CD14-positive monocyte (primary cell): ENCODE measurements at regions of chr3 and their contacts with region 1.

Region 1: GRCh38 chr3:72270072-72270681 is 485.2 kb upstream of the PROK2 start:
- DNase-seq: peak; percentile 96 to 99 (median 97)
- H3K4me3 ChIP-seq: peak overlapping the region in 1 of 3 experiments; percentile 25
- H3K4me3 Mint-ChIP-seq: peak overlapping the region in 1 of 2 donors; percentile 69
- H3K27ac ChIP-seq: peak overlapping the region; percentile 75 to 92
- H3K27ac Mint-ChIP-seq: peak overlapping the region; percentile 96 to 98 (median 97)
- H3K4me1 ChIP-seq: peaks cover 64 to 74% of the 10 kb centered on the region in 2 donors
- H3K4me1 Mint-ChIP-seq: peaks cover 84% of the 10 kb centered on the region
- H3K27me3 ChIP-seq: no peaks in the 10 kb centered on the region
- H3K27me3 Mint-ChIP-seq: peaks cover 0 to 7% (median 6%) of the 10 kb centered on the region in 3 donors
- CTCF ChIP-seq: no peak

Region 2: DNA sequence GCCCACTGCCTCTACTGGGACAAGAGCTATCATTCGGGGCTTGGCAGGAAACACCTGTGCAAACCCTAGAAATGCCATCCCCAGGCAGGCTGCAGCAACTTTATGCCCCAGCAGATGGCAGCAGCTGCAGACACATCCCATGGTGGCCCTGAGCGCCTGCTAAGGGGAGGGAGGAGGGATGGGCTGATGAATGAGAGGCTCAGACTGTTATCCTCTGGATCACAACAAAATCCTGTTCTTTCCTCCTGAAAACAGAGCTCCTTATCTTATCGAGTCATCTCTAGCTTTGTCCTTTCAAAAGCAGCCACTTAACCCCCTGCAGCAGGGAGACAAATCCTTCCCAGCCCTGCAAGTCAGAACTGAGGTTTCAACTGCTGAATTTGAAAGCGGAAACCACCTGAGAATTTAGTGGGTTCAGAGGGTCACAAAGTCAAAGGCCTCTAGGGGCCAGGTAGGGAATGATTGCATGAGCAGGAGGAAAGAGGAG is 394.7 kb before region 1 on chr3:
- intact Hi-C with region 1: no loop called
- DNase-seq: peak; percentile 63 to 71 (median 66)
- H3K4me3 ChIP-seq: no peak overlapping the region
- H3K4me3 Mint-ChIP-seq: no peak overlapping the region
- H3K27ac ChIP-seq: no peak overlapping the region
- H3K27ac Mint-ChIP-seq: no peak overlapping the region
- H3K4me1 ChIP-seq: no peaks in the 10 kb centered on the region
- H3K4me1 Mint-ChIP-seq: peaks cover 11% of the 10 kb centered on the region
- H3K27me3 ChIP-seq: peaks cover 19 to 22% of the 10 kb centered on the region in 2 donors
- H3K27me3 Mint-ChIP-seq: peaks cover 27 to 40% (median 36%) of the 10 kb centered on the region in 3 donors
- CTCF ChIP-seq: peak; percentile 89

Region 3: DNA sequence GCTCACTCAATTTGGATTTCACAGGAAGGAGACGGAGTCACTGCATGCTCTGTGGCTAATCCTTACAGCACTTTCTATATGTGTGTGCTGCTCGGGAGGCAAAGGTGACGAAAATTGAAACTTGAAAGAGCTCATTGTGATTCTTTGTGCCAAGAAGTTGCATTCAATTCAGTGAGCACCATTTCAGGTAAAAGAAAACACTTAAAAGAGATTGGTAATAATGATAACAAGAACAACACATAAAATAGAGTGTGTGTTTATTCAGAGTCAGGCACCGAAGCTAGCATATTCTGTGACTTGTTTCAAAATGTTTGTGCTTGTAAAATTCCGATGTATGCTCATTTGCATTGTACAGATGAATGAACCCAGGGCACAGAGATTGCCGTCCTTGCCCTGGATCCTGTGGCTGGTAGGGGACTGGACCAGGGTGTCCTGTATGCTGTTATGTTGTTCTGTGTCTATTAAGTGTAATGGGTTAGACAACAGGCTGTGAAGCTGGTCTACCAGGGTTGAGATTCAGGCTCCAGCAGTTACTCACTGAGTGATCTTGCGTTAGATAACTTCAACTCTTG is 291.9 kb before region 1 on chr3:
- intact Hi-C with region 1: loop called in 1 of 2 experiments (anchors 10 kb)
- DNase-seq: no peak
- H3K4me3 ChIP-seq: no peak overlapping the region
- H3K4me3 Mint-ChIP-seq: no peak overlapping the region
- H3K27ac ChIP-seq: no peak overlapping the region
- H3K27ac Mint-ChIP-seq: peak overlapping the region in 1 of 7 donors; percentile 52
- H3K4me1 ChIP-seq: peaks cover 15 to 17% of the 10 kb centered on the region in 2 donors
- H3K4me1 Mint-ChIP-seq: peaks cover 34% of the 10 kb centered on the region
- H3K27me3 ChIP-seq: no peaks in the 10 kb centered on the region
- H3K27me3 Mint-ChIP-seq: peaks cover 5 to 8% (median 6%) of the 10 kb centered on the region in 3 donors
- CTCF ChIP-seq: no peak

Region 4: GRCh38 chr3:72223116-72223515 is 47.1 kb before region 1 on chr3:
- intact Hi-C with region 1: no loop called
- DNase-seq: no peak
- H3K4me3 ChIP-seq: no peak overlapping the region
- H3K4me3 Mint-ChIP-seq: no peak overlapping the region
- H3K27ac ChIP-seq: no peak overlapping the region
- H3K27ac Mint-ChIP-seq: no peak overlapping the region
- H3K4me1 ChIP-seq: no peaks in the 10 kb centered on the region
- H3K4me1 Mint-ChIP-seq: peaks cover 8% of the 10 kb centered on the region
- H3K27me3 ChIP-seq: no peaks in the 10 kb centered on the region
- H3K27me3 Mint-ChIP-seq: peaks cover 0 to 1% (median 0%) of the 10 kb centered on the region in 3 donors
- CTCF ChIP-seq: no peak

Region 5: DNA sequence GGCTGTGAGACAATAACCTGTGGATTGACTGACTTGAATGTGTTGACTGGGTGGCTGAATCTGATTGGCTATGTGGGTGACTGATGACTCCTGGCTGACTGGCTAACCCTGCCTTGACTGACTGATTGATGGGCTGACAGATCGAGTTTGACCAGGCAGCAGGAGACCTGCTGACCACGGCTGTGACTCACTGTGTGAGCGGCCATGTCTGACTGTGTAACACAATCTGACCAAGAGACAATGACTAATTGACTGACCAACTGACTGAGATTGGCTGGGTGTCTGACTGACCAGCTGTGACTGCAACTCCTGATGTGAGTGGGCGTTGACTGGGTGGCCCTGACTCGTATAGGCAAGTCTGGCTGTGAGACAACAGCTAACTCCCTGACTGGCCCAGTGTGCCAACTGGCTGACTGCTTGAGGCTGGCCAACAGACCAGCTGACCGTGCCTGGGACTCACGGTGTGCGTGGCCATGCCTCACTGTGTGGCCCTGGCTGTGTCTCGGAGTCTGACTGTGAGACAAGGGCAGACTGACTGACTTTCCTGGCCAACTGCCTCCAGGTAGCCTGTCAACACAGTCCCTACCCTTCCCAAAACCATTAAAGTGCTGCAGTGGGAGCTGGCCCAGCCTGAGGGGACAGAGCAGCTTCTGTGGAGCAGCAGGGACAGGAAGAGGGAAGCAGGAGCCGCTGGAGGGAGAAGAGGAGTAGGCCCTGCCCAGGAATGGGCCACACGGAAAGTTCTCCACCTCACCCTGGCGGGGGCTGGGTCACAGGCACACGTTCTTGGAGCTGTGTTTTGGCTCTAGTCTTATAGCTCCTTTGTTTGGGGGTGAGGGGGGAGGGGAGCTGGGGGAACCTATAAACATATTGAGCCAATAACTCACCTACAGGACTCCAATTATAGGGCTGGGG is 69.2 kb after region 1 on chr3:
- intact Hi-C with region 1: loop called in 1 of 2 experiments (anchors 5 kb)
- DNase-seq: peak; percentile 85 to 97 (median 92)
- H3K4me3 ChIP-seq: no peak overlapping the region
- H3K4me3 Mint-ChIP-seq: no peak overlapping the region
- H3K27ac ChIP-seq: no peak overlapping the region
- H3K27ac Mint-ChIP-seq: peak overlapping the region in 1 of 7 donors; percentile 78
- H3K4me1 ChIP-seq: peaks cover 7% of the 10 kb centered on the region in 2 donors
- H3K4me1 Mint-ChIP-seq: peaks cover 15% of the 10 kb centered on the region
- H3K27me3 ChIP-seq: no peaks in the 10 kb centered on the region
- H3K27me3 Mint-ChIP-seq: peaks cover 0 to 4% (median 0%) of the 10 kb centered on the region in 3 donors
- CTCF ChIP-seq: no peak